Gastrocnemius medialis (tissue), 4 donors: ENCODE measurements at regions of chr7 and their contacts with region 1.

Region 1: DNA sequence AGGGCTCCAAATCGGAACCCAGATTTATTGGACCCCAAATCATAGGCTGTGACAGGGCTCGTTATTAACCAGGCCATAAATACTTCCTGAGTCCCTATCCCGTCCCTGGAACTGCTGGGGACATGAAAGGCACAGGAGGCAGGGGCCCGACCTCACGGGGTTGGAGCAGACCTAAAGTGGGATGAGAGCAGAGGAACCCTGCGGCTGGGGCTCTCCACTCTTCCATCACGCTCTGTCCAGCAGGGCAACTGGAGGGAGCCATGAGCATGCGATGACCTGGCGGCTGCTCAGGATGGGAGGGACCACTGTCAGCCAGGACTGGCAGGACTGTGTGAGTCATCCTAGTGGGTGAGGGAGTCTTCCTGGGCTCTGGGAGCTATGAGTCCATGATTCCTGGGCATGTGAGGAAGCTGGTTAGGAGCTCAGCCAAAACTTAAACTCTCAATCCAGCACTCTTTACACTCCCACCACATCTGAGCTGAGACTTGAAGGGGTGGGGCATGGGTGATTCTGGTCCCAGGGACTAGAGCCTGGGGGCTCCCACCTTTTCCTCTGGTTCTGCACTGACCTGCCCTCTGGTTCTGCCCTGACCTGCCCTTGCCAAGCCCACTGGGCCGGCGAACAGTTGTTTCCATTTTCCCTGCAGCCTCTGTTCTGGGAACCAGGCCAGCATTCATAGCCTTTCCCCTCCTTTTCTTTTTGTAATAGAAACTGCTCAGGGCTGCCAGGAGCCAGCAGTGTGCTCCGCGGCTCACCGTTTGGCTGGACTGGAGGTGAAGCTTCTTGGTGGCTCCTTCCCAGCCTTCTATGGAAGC is 47.1 kb downstream of the SYPL1 start:
- DNase-seq: peak; percentile 94 to 95
- ATAC-seq: peak; percentile 94 to 96
- H3K4me3 ChIP-seq: peak overlapping the region; percentile 35 to 55 (median 48)
- H3K27ac ChIP-seq: peak overlapping the region; percentile 81 to 92 (median 86)
- H3K4me1 ChIP-seq: peaks cover 22 to 35% of the 10 kb centered on the region in 2 donors
- H3K27me3 ChIP-seq: no peaks in the 10 kb centered on the region
- CTCF ChIP-seq: peak in 1 of 5 experiments; percentile 20
- POLR2A ChIP-seq: no peak

Region 2: DNA sequence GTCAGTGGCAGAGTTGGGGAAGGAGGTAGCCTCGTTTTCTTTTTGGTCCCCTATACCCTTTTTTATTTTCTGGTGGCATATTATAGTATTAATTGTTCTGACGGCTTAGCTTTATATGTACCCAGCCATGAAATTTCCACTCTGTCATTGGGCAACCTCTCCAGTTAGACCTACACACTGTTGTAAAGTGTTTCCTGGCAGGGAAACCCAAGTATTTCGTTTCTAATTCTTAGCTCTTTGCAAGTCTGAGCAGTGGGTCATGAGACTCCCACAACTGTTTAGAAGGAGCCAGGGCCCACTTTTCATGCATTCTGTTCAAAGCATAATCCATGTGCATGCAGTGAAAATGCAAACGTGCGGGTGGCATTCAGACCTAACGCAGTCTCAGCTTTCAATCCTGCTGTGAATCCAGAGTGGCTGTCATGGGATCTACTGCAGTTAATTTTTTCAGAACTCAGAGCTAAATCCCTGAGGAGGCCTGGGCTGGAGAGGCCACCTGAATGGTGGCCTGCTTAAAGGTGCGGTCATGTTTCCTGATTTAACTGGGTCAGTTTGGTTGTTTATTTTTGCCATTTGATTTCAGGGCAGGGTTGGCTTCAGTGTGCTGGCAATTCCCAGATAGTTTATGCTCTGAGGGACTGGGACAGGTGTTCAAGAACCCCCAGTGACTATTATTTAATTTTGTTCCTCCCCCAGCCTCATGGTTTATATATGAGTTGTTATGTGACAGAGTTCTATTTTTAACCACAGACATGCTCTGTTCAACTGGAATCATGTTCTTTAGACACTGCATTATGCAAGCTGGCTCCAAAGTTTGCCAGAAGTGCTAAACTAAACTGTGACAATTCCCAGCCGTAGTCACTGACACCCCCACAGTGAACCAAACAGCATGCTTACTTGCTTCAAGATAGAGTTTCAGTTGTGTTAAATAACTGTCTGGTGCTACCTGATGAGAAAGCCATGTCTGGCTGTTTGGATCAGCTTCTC is 74.6 kb after region 1 on chr7:
- in situ Hi-C with region 1: no loop called
- intact Hi-C with region 1: loop called (anchors 1 kb)
- DNase-seq: peak; percentile 84 to 88
- ATAC-seq: peak; percentile 91 to 93
- H3K4me3 ChIP-seq: peak overlapping the region; percentile 7 to 26 (median 10)
- H3K27ac ChIP-seq: peak overlapping the region; percentile 91 to 98 (median 93)
- H3K4me1 ChIP-seq: peaks cover 32 to 38% of the 10 kb centered on the region in 2 donors
- H3K27me3 ChIP-seq: no peaks in the 10 kb centered on the region
- CTCF ChIP-seq: peak in 1 of 5 experiments; percentile 9
- POLR2A ChIP-seq: peak in 1 of 2 donors; percentile 64

Region 3: GRCh38 chr7:106840342-106840741 is 775.4 kb after region 1 on chr7:
- in situ Hi-C with region 1: no loop called
- intact Hi-C with region 1: no loop called
- DNase-seq: no peak
- ATAC-seq: no peak
- H3K4me3 ChIP-seq: no peak overlapping the region
- H3K27ac ChIP-seq: no peak overlapping the region
- H3K4me1 ChIP-seq: no peaks in the 10 kb centered on the region
- H3K27me3 ChIP-seq: no peaks in the 10 kb centered on the region
- CTCF ChIP-seq: no peak
- POLR2A ChIP-seq: no peak